RWPE1 (cell line): ENCODE measurements at regions of chr12 and their contacts with region 1.

Region 1: DNA sequence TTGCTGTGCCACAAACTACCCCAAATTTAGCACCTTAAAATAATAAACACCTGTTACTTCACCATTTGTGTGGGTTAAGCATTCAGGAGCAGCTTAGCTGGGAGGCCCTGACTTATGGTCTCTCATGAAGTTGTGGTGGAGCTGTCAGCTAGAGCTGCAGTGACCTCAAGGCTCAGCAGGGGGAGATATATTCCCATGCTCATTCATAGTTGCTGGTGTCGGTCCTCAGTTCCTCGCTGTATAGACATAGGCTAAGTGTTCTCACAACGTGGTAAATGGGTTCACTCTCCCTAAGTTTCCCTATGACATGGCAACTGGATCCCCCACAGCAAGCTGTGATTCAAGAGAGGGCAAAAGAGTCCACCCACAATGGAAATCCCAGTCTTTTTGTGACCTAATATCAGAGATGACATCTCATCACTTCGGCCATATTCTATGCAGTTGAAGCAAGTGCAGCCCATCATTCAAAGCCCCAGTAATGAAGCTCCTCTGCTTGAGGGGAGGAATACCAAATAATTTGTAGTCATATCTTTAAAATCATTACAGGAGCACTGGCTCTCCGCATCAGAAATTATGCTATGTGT is 41.1 kb downstream of the PRB3 start:
- DNase-seq: peak; percentile 54
- H3K27ac ChIP-seq: no peak overlapping the region
- CTCF ChIP-seq: no peak; the same call in 1 of the 2 replicates

Region 2: GRCh38 chr12:11486623-11487444 is 258.4 kb after region 1 on chr12:
- CTCF ChIA-PET with region 1: interaction called, 17 read pairs
- POLR2A ChIA-PET with region 1: no interaction called
- DNase-seq: peak; percentile 71
- H3K27ac ChIP-seq: no peak overlapping the region
- CTCF ChIP-seq: peak; percentile 78